ENCODE measurements at regions of chr7 and their contacts with region 1.

Region 1: GRCh38 chr7:36318116-36318515 is 71.5 kb upstream of the ANLN start:
- DNase-seq: no peak
- ATAC-seq: no peak
- H3K4me3 Mint-ChIP-seq: no peak overlapping the region
- H3K27ac Mint-ChIP-seq: no peak overlapping the region
- H3K4me1 Mint-ChIP-seq: peaks cover 2% of the 10 kb centered on the region
- H3K27me3 Mint-ChIP-seq: peaks cover 8% of the 10 kb centered on the region

Region 2: GRCh38 chr7:35985126-35985754 is 332.9 kb before region 1 on chr7:
- CTCF ChIA-PET with region 1: interaction called, 22 read pairs
- DNase-seq: peak; percentile 79
- ATAC-seq: peak; percentile 98
- H3K4me3 Mint-ChIP-seq: no peak overlapping the region
- H3K27ac Mint-ChIP-seq: no peak overlapping the region
- H3K4me1 Mint-ChIP-seq: no peaks in the 10 kb centered on the region
- H3K27me3 Mint-ChIP-seq: peaks cover 4% of the 10 kb centered on the region

Region 3: GRCh38 chr7:36207451-36208291 is 110.4 kb before region 1 on chr7:
- CTCF ChIA-PET with region 1: no interaction called
- DNase-seq: no peak
- ATAC-seq: no peak
- H3K4me3 Mint-ChIP-seq: no peak overlapping the region
- H3K27ac Mint-ChIP-seq: no peak overlapping the region
- H3K4me1 Mint-ChIP-seq: peaks cover 25% of the 10 kb centered on the region
- H3K27me3 Mint-ChIP-seq: peaks cover 5% of the 10 kb centered on the region

Region 4: GRCh38 chr7:36291387-36292316 is 26.5 kb before region 1 on chr7:
- CTCF ChIA-PET with region 1: interaction called, 14 read pairs
- DNase-seq: peak; percentile 75
- ATAC-seq: peak; percentile 58
- H3K4me3 Mint-ChIP-seq: peak overlapping the region; percentile 57
- H3K27ac Mint-ChIP-seq: no peak overlapping the region
- H3K4me1 Mint-ChIP-seq: peaks cover 36% of the 10 kb centered on the region
- H3K27me3 Mint-ChIP-seq: no peaks in the 10 kb centered on the region

Region 5: DNA sequence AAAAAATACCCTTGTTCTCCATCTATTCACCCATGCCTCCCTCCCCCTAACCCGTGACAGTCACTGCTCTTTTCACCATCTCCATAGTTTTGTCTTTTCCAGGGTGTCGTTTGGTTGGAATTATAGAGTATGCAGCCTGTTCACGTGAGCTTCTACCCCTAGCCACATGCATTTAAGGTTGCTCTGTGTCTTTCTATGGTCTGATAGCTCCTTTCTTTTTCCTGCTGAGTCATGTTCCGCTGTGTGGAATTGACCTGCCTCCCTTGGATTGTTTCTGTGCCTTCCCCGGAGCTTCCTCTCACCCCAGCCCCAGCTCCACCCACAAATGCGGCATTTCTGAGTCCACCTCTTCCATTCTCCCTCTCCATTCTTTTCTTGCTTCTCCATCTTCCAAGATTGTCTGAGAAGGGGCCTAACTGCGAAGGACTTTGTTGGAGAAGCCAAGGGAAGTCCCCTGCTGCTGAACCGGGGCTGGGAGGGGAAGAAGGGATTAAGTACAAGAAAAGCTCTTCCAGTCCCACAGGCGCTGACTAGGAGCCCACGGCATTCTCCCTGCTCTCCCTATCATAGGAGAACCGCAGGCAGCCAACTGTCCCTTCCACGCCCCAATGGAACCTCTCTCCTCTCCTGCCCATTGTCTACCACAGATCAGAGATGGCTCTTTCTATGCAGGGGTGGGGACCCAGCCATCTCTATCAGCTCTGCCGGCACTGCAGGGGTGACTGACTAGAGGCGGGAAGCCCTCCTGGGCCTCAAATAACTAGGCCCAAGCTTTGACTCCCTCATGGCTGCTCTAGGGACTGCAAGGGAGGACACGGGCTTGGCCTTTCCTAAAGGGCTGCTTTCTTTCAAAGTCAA is 16.0 kb before region 1 on chr7:
- CTCF ChIA-PET with region 1: interaction called, 14 read pairs
- DNase-seq: no peak
- ATAC-seq: no peak
- H3K4me3 Mint-ChIP-seq: no peak overlapping the region
- H3K27ac Mint-ChIP-seq: no peak overlapping the region
- H3K4me1 Mint-ChIP-seq: no peaks in the 10 kb centered on the region
- H3K27me3 Mint-ChIP-seq: no peaks in the 10 kb centered on the region

Region 6: GRCh38 chr7:36336390-36336789 is 18.3 kb after region 1 on chr7:
- CTCF ChIA-PET with region 1: interaction called, 11 read pairs
- DNase-seq: no peak
- ATAC-seq: no peak
- H3K4me3 Mint-ChIP-seq: no peak overlapping the region
- H3K27ac Mint-ChIP-seq: no peak overlapping the region
- H3K4me1 Mint-ChIP-seq: no peaks in the 10 kb centered on the region
- H3K27me3 Mint-ChIP-seq: no peaks in the 10 kb centered on the region

Region 7: GRCh38 chr7:36366718-36367560 is 48.8 kb after region 1 on chr7:
- CTCF ChIA-PET with region 1: interaction called, 10 read pairs
- DNase-seq: peak; percentile 94
- ATAC-seq: peak; percentile 99
- H3K4me3 Mint-ChIP-seq: peak overlapping the region; percentile 86
- H3K27ac Mint-ChIP-seq: peak overlapping the region; percentile 66
- H3K4me1 Mint-ChIP-seq: peaks cover 4% of the 10 kb centered on the region
- H3K27me3 Mint-ChIP-seq: peaks cover 26% of the 10 kb centered on the region

Region 8: DNA sequence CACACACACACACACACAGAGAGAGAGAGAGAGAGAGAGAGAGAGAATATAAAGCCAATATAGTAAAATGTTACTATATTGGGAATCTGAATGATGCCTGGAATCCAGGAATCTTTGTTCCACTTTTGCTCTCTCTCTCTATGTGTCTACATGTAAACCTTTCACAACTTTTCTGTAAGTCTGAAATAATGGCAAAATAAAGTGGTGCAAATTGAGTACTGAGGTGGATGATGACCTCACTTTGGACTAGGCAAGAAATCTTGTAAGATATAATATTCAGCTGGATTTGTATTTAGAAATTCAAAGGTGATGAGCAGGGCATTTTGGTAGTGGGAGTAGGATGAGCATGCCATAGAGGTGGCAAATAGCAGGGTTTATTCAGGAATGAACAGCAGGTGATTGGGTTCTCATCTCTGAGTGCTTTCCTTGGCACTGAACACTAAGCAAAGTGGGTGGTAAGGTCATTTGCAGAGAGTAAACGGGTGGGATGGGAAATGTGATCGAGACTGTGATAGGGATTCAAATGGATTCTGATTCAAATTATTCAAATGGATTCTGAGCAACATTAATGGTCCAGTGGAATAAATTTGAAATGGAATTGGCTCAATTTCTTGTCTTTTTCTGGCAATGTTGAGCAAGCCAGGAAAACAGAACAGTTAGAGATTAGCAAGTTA is 61.9 kb after region 1 on chr7:
- CTCF ChIA-PET with region 1: no interaction called
- DNase-seq: no peak
- ATAC-seq: no peak
- H3K4me3 Mint-ChIP-seq: no peak overlapping the region
- H3K27ac Mint-ChIP-seq: no peak overlapping the region
- H3K4me1 Mint-ChIP-seq: peaks cover 8% of the 10 kb centered on the region
- H3K27me3 Mint-ChIP-seq: peaks cover 20% of the 10 kb centered on the region

Region 9: DNA sequence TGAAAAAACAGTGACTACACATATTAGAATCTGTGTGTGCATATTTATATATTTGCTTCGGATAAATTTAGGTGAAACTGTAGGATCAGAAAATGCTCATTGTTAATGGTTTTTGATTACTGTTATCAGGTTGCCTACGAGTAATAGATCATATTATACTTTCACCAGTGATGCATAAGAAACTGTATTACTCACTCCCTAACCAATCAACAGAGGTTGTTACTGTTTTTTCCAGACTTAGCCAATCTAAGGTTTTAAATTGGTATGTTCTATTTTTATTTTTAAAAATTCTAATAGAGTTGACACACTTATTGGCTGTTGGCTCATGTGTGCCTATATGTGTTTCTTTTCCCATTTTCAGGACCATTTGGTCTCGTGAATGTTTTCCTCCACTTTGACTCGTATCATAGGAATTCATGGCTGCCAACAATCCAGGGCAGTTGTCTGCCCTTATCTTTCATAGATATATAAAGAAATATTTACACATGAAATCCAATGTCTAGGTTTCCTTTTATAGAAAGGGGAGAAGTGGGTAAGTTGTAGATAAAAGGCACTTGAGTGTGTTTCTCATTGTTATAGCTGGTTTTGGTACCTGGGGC is 130.8 kb after region 1 on chr7:
- CTCF ChIA-PET with region 1: no interaction called
- DNase-seq: no peak
- ATAC-seq: no peak
- H3K4me3 Mint-ChIP-seq: no peak overlapping the region
- H3K27ac Mint-ChIP-seq: no peak overlapping the region
- H3K4me1 Mint-ChIP-seq: no peaks in the 10 kb centered on the region
- H3K27me3 Mint-ChIP-seq: no peaks in the 10 kb centered on the region

Measured in activated CD8-positive, alpha-beta memory T cell treated with anti-CD3 and anti-CD28 coated beads, Interleukin-2, amount 10 ng/mL, durations not matched to agents 7 days and 5 days (primary cell).